Activated CD4-positive, alpha-beta memory T cell treated with anti-CD3 and anti-CD28 coated beads for 36 hours (primary cell): ENCODE measurements at regions of chr16 and their contacts with region 1.

Region 1: DNA sequence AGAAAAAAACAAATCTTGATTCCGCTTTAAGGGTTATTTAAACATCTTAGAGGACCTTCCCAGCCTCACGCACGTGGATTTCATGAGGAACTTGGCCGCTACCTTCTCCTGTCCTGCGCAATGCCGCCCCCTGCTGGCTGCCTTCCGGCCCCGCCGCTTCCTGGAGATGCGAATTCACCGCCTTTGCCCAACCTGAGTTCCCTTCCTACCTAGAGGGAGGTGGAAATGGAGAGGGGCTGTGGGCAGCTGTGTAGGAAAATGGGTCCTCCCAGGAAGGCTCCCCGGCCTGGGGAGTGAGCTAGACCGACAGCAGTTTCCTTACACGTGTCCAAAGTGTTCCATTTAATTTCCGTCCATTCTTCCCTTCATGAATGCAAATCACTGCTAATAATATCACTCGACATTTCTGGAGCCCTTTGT is 1.0 kb upstream of the ABCC12 start:
- DNase-seq: peak; percentile 89
- H3K4me3 Mint-ChIP-seq: no peak overlapping the region
- H3K27ac Mint-ChIP-seq: no peak overlapping the region
- H3K4me1 Mint-ChIP-seq: peaks cover 26% of the 10 kb centered on the region
- H3K27me3 Mint-ChIP-seq: peaks cover 18% of the 10 kb centered on the region

Region 2: GRCh38 chr16:47037746-47038458 is 1118.9 kb before region 1 on chr16:
- CTCF ChIA-PET with region 1: interaction called, 14 read pairs
- POLR2A ChIA-PET with region 1: no interaction called
- intact Hi-C with region 1: loop called (anchors 2 kb)
- DNase-seq: peak; percentile 92
- H3K4me3 Mint-ChIP-seq: peak overlapping the region; percentile 71
- H3K27ac Mint-ChIP-seq: no peak overlapping the region
- H3K4me1 Mint-ChIP-seq: peaks cover 6% of the 10 kb centered on the region
- H3K27me3 Mint-ChIP-seq: peaks cover 4% of the 10 kb centered on the region

Region 3: DNA sequence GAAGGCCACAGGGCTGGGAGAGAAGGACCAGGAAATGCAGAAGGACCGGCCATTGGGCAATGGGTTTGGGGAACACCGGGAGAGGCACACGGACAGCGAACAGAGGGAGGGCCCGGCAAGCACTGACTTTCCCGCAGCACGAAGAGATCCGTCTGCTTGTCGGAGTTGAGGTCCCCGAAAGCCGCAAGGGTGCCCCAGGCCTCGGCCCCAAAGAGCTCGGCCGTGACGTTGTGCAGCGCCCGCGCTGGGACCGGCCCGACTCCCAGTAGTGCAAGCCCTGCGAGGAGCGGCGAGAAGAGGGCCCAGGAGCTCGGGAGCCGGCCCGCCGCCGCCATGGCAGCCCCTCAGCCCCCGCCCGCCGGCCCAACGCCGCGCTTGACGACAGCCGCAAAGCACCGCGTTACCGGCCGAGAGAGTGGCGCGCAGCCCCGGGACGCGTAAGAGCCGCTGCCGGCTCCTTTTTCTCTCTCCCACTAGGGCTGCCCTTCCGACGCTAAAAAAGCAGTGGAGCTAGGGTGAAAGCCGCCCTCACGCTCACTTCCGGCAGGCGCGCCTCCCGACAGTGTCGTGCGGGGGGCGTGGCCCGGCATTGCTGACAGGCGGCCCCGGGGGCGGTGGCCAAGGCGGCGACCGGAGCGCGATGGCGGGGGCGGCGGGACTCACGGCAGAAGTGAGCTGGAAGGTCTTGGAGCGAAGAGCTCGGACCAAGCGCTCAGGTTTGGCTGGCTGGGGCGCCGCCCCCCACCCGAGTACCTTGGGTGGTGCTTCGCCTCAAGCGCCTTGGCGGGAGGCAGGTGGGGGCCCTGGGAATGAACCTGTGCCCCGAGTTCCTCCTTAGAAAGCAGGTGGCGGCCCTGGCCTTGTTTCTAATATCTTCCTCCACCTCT is 695.8 kb before region 1 on chr16 and contains the starts of genes ITFG1 and PHKB:
- CTCF ChIA-PET with region 1: interaction called, 3 read pairs
- POLR2A ChIA-PET with region 1: no interaction called
- intact Hi-C with region 1: loop called (anchors 2 kb)
- DNase-seq: peak; percentile 96
- H3K4me3 Mint-ChIP-seq: peak within 1 kb of the TSS; percentile 93
- H3K27ac Mint-ChIP-seq: peak within 1 kb of the TSS; percentile 95
- H3K4me1 Mint-ChIP-seq: peaks cover 53% of the 10 kb centered on the region
- H3K27me3 Mint-ChIP-seq: no peaks in the 10 kb centered on the region
- total RNA-seq, gene ITFG1: 20.6 to 22.0 TPM
- total RNA-seq, gene PHKB: 27.6 to 28.8 TPM

Region 4: DNA sequence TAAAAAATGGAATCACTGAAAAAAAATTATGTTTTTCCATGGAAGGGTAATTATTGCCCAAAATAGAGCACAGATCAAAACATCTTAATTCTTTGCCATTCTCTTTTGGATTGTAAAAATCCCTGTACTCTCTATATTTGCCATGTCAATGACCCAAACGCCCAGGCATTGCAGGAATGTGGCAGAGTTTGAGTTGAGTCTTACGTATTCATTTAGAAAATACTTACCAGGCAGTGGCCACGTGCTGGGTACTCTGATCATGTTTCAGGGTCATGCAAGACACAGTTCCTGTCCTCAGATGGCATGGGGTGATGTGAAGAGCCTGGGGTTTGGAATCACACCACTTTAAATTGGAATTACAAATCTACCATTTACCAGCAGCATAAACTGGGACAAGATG is 268.7 kb before region 1 on chr16:
- CTCF ChIA-PET with region 1: no interaction called
- POLR2A ChIA-PET with region 1: no interaction called
- intact Hi-C with region 1: loop called (anchors 10 kb)
- DNase-seq: no peak
- H3K4me3 Mint-ChIP-seq: no peak overlapping the region
- H3K27ac Mint-ChIP-seq: no peak overlapping the region
- H3K4me1 Mint-ChIP-seq: no peaks in the 10 kb centered on the region
- H3K27me3 Mint-ChIP-seq: peaks cover 11% of the 10 kb centered on the region

Region 5: DNA sequence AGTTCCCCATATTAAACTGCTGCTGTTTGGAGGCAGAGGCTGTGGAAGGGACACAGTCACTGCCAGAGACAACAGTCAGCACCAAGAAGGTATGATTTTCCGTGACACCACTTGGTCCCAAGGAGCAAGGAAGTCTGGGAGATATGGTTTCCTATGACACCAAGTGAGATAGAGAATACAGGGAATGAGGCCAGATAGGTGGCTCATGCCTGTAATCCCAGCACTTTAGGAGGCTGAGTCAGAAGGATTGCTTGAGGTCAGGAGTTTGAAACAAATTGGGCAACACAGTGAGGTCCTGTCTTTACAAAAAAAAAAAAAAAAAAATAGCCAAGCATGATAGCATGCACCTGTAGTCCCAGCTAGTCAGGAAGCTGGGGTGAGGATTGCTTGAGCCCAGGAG is 91.8 kb before region 1 on chr16:
- CTCF ChIA-PET with region 1: no interaction called
- POLR2A ChIA-PET with region 1: no interaction called
- intact Hi-C with region 1: no loop called
- DNase-seq: no peak
- H3K4me3 Mint-ChIP-seq: no peak overlapping the region
- H3K27ac Mint-ChIP-seq: no peak overlapping the region
- H3K4me1 Mint-ChIP-seq: no peaks in the 10 kb centered on the region
- H3K27me3 Mint-ChIP-seq: peaks cover 10% of the 10 kb centered on the region

Region 6: DNA sequence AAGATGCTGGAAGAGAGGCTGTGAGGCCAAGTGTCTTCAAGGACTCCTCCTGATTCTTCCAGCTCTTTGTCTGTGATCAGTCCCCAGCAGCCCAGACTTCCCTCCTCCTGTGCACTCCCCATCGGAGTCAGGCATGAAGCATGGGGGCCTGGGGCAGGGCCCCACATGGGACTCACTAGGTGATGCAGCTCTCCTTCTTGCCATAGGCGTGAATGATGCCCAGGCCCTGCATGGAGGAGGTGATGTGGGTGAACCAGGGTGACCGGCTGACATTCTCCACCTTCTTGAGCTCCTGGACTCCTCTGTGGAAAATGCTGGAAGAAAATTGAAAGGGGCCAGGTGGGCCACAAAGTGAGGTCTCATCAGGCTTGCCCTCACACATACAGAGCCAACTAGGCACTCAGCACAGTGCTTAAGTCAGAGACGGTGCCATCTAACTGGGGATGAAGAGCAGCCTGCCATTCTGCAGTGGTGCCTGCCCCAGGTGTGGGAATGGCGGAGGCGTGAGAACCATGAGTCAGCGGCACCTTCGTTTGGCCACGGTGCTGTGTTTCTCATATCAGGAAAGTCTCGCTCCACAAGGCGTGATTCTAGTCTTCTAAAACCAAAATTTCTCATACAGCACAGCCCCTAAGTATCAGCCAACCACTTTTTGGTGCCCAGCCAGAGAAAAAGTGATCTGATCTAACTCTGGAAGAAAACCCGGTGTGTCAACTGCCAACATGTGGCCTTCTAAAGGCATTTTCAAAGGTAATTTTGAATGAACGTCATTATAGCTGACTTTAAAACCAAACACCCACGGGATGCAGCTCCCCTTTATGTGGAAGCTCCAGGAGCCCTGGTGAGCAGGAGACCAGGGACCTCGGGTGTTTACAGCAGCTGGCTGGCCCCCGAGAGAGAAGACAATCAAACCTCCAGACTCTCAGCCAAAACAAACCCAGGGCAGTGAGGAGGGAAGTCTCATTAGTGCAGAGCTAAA is 55.8 kb before region 1 on chr16:
- CTCF ChIA-PET with region 1: interaction called, 3 read pairs
- POLR2A ChIA-PET with region 1: interaction called, 3 read pairs
- intact Hi-C with region 1: loop called (anchors 1 kb)
- DNase-seq: peak; percentile 86
- H3K4me3 Mint-ChIP-seq: no peak overlapping the region
- H3K27ac Mint-ChIP-seq: no peak overlapping the region
- H3K4me1 Mint-ChIP-seq: peaks cover 18% of the 10 kb centered on the region
- H3K27me3 Mint-ChIP-seq: peaks cover 32% of the 10 kb centered on the region